ENCODE measurements at regions of chr1 and their contacts with region 1.

Region 1: GRCh38 chr1:226424228-226425003 is 16.5 kb upstream of the PARP1 start:
- DNase-seq: no peak
- ATAC-seq: peak; percentile 65 to 79
- H3K4me3 ChIP-seq: no peak overlapping the region
- H3K27ac ChIP-seq: no peak overlapping the region
- H3K4me1 ChIP-seq: no peaks in the 10 kb centered on the region
- H3K27me3 ChIP-seq: no peaks in the 10 kb centered on the region

Region 2: GRCh38 chr1:226378071-226378470 is 46.3 kb before region 1 on chr1:
- intact Hi-C with region 1: no loop called
- DNase-seq: no peak
- ATAC-seq: no peak
- H3K4me3 ChIP-seq: no peak overlapping the region
- H3K27ac ChIP-seq: no peak overlapping the region
- H3K4me1 ChIP-seq: peaks cover 6% of the 10 kb centered on the region
- H3K27me3 ChIP-seq: no peaks in the 10 kb centered on the region

Region 3: DNA sequence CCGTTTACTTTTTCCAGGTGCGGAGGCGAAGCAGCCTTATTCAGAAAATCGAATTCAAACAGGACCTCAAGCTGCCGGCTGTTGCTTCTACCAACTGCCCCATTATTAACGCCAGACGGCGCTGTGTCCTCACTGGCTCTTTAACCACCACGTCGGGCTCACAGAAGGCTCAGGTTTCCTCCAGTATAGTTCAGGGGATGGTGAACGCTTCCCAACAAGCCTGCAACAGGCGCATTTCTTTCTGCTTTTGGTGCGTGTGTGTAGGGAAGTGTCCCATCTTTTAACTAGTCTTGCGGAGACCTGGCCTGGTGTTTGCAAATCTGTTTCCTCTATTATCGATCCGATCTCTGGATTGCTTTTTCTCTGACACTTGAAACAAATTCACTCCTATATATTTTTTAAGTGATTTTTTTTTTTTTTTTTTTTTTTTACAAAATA is 123.4 kb after region 1 on chr1:
- intact Hi-C with region 1: loop called in 1 of 4 experiments (anchors 10 kb)
- DNase-seq: peak; percentile 81 to 92 (median 87)
- ATAC-seq: peak; percentile 75 to 83
- H3K4me3 ChIP-seq: peak overlapping the region; percentile 74
- H3K27ac ChIP-seq: no peak overlapping the region
- H3K4me1 ChIP-seq: peaks cover 12% of the 10 kb centered on the region
- H3K27me3 ChIP-seq: no peaks in the 10 kb centered on the region

Measured in right cardiac atrium (tissue), 5 donors.